ENCODE measurements at regions of chr4 and their contacts with region 1.

Region 1: DNA sequence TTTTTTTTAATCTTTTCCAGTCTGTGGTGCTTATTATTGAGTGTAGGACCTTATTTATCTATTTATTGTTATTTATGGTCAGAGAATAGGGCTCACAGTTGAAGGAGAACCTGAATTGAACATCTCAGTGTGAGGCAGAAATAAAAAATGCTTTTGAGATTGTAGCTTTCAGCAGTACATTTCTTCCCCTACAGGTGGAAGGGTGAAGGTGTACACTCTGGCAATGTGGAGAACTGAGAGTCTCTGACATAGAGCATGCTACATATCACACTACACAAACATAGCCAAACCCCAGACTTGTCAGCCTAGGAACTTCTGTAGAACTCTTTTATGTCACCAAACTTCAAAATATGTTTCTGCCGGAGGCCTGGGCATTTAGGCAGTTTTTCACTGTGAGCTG is 140.2 kb downstream of the STIM2 start:
- DNase-seq: peak; percentile 15
- H3K4me3 ChIP-seq: no peak overlapping the region
- H3K27ac ChIP-seq: no peak overlapping the region
- H3K4me1 ChIP-seq: peaks cover 1% of the 10 kb centered on the region
- H3K27me3 ChIP-seq: no peaks in the 10 kb centered on the region
- CTCF ChIP-seq: peak; percentile 44 to 64

Region 2: GRCh38 chr4:26741491-26741871 is 259.3 kb before region 1 on chr4:
- CTCF ChIA-PET with region 1: no interaction called
- dilution Hi-C with region 1: no loop called
- in situ Hi-C with region 1: loop called in 1 of 2 experiments (anchors 25 kb)
- intact Hi-C with region 1: loop called (anchors 5 kb)
- DNase-seq: no peak
- H3K4me3 ChIP-seq: no peak overlapping the region
- H3K27ac ChIP-seq: no peak overlapping the region
- H3K4me1 ChIP-seq: no peaks in the 10 kb centered on the region
- H3K27me3 ChIP-seq: no peaks in the 10 kb centered on the region
- CTCF ChIP-seq: no peak

Region 3: GRCh38 chr4:26787461-26788340 is 213.1 kb before region 1 on chr4:
- CTCF ChIA-PET with region 1: no interaction called
- dilution Hi-C with region 1: no loop called
- in situ Hi-C with region 1: no loop called
- intact Hi-C with region 1: loop called (anchors 5 kb)
- DNase-seq: peak; percentile 85
- H3K4me3 ChIP-seq: no peak overlapping the region
- H3K27ac ChIP-seq: peak overlapping the region; percentile 48
- H3K4me1 ChIP-seq: peaks cover 20% of the 10 kb centered on the region
- H3K27me3 ChIP-seq: no peaks in the 10 kb centered on the region
- CTCF ChIP-seq: peak in 1 of 2 donors; percentile 24

Region 4: GRCh38 chr4:27350161-27350560 is 349.3 kb after region 1 on chr4:
- CTCF ChIA-PET with region 1: no interaction called
- dilution Hi-C with region 1: no loop called
- in situ Hi-C with region 1: no loop called
- intact Hi-C with region 1: no loop called
- DNase-seq: peak; percentile 64
- H3K4me3 ChIP-seq: no peak overlapping the region
- H3K27ac ChIP-seq: no peak overlapping the region
- H3K4me1 ChIP-seq: peaks cover 3% of the 10 kb centered on the region
- H3K27me3 ChIP-seq: no peaks in the 10 kb centered on the region
- CTCF ChIP-seq: no peak

Measured in mammary epithelial cell (primary cell).